ENCODE measurements at regions of chr17 and their contacts with region 1.

Region 1: DNA sequence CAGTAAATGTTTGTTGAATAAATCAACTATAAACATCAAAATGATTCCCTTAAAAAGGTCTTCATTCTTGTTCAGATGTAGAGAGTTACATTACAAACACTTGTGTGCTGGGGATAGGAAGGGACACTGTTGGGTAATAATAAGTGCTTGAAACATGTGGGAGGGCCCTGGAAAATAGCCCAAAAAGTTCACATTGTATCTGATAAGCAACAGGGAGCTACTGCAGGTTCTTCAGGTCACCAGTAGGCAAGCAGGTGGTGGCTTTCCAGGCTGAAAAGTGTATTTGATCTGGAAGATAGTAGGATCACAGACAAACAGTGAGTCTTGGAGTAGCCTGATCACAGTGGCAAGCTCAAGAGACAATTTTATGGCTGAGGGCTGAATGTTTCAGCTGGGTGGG is 19.0 kb upstream of the ZNF652 start:
- DNase-seq: no peak
- ATAC-seq: no peak
- H3K4me3 ChIP-seq: no peak overlapping the region
- H3K27ac ChIP-seq: no peak overlapping the region
- H3K4me1 ChIP-seq: no peaks in the 10 kb centered on the region
- CTCF ChIP-seq: no peak
- EP300 ChIP-seq: no peak
- POLR2A ChIP-seq: no peak
- RAD21 ChIP-seq: no peak

Region 2: GRCh38 chr17:49343273-49343672 is 37.8 kb before region 1 on chr17:
- CTCF ChIA-PET with region 1: interaction called, 5 read pairs
- POLR2A ChIA-PET with region 1: interaction called, 20 read pairs
- DNase-seq: no peak
- ATAC-seq: no peak
- H3K4me3 ChIP-seq: no peak overlapping the region
- H3K27ac ChIP-seq: no peak overlapping the region
- H3K4me1 ChIP-seq: no peaks in the 10 kb centered on the region
- CTCF ChIP-seq: no peak
- EP300 ChIP-seq: no peak
- POLR2A ChIP-seq: no peak
- RAD21 ChIP-seq: no peak

Region 3: DNA sequence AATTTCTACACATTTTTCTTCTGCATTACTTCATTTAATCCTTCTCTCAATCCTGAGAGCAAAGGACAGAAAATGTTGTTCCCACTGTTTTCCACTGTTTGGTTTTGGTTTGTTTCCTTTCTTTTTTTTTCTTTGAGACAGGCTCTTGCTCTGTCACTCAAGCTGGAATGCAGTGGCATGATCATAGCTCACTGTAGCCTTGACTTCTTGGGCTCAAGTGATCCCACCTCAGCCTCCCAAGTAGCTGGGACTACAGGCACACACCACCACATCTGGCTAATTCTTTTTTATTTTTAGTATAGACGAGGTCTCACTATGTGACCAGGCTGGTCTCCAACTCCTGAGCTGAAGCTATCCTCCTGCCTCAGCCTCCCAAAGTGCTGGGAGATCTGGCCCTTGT is 12.0 kb before region 1 on chr17:
- CTCF ChIA-PET with region 1: interaction called, 12 read pairs
- POLR2A ChIA-PET with region 1: no interaction called
- DNase-seq: no peak
- ATAC-seq: no peak
- H3K4me3 ChIP-seq: no peak overlapping the region
- H3K27ac ChIP-seq: no peak overlapping the region
- H3K4me1 ChIP-seq: no peaks in the 10 kb centered on the region
- CTCF ChIP-seq: no peak
- EP300 ChIP-seq: no peak
- POLR2A ChIP-seq: no peak
- RAD21 ChIP-seq: no peak